ENCODE measurements at regions of chr7 and their contacts with region 1.

Region 1: GRCh38 chr7:149028346-149029109 is at the start of gene PDIA4:
- DNase-seq: peak; percentile 100
- H3K4me3 Mint-ChIP-seq: peak within 1 kb of the TSS; percentile 98
- H3K27ac Mint-ChIP-seq: peak within 1 kb of the TSS; percentile 93
- H3K4me1 Mint-ChIP-seq: peaks cover 32% of the 10 kb centered on the region
- H3K27me3 Mint-ChIP-seq: peaks cover 2% of the 10 kb centered on the region
- total RNA-seq, gene PDIA4: 155 and 159 TPM in 2 replicates

Region 2: GRCh38 chr7:148983187-148984146 is 45.1 kb before region 1 on chr7:
- intact Hi-C with region 1: loop called (anchors 1 kb)
- DNase-seq: peak; percentile 71
- H3K4me3 Mint-ChIP-seq: peak overlapping the region; percentile 97
- H3K27ac Mint-ChIP-seq: peak overlapping the region; percentile 85
- H3K4me1 Mint-ChIP-seq: peaks cover 39% of the 10 kb centered on the region
- H3K27me3 Mint-ChIP-seq: peaks cover 5% of the 10 kb centered on the region

Region 3: DNA sequence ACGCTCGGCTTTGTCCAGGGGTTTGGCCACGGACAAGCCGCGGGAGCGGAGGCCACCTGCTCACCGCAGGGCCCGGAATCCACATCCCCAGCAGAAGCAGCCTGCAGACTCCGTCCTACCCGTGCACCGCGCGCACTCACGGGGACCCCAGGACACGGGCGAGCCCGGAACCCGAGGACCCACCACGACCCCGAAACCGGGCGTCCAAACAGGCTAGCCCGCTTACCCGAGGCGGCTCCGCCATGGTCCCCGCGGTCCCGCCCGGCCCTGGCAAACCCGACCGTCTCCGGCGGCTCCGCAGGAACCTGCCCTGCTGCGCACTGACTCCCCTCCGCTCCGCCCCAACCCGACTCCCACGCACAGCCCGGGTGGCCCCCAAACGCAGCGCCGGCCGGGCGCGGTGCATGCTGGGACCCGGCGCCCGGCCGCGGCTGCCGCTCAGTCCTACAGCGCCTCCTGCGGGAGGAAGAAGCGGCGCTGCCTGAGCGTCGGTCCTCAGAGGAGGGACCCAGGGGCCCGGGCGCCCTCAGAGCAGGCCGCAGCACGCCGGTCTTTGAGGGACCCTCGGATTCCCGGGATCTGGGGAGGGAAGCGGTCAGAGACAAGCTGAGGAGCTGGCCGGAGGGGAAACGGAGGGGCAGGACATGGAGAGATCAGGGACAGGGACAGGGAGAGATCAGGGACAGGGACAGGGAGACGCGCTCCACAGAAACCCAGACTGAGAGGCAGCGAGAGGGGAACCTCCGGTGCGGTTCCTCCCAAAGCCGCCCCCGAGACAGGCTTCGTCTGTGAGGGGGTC is 62.1 kb after region 1 on chr7 and contains the start of gene ZNF786:
- intact Hi-C with region 1: loop called (anchors 1 kb)
- DNase-seq: peak; percentile 85
- H3K4me3 Mint-ChIP-seq: peak within 1 kb of the TSS; percentile 100
- H3K27ac Mint-ChIP-seq: peak within 1 kb of the TSS; percentile 100
- H3K4me1 Mint-ChIP-seq: peaks cover 12% of the 10 kb centered on the region
- H3K27me3 Mint-ChIP-seq: no peaks in the 10 kb centered on the region
- total RNA-seq, gene ZNF786: 10.0 and 10.3 TPM in 2 replicates

Region 4: DNA sequence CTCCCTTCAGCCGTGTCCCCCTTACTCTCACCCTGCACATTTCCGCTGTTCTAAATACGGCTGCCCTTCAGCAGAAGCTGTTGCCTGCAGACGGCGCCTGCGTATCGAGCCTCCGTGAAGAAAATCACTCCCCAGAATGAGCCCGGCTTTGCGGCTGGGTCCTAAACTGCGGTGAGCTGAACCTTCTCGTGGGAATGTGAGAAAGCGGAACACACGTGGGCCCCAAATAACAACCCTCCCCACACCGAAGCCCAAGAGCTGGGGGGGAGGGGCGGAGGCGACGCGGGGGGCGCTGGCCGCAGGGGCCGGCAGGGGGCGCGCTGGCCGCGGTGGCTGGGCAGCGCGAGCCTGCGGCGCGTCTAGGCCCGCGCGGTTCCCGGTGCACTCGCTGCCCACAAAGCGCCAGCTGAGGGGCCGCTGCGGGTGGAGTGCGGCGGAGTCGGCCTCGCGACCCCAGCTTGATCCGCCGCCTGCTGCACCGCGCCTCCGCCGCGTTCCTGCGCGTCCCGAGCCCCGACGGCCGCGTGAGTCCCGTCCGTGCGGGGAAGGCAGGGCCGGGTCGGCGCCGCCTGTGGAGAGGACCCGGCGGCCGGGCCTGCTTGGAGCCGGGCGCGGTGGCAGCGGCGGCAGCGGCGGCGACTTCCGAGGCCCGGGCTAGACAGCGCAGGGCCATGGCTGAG is 118.7 kb after region 1 on chr7 and contains the start of gene ZNF398:
- intact Hi-C with region 1: loop called (anchors 2 kb)
- DNase-seq: peak; percentile 74
- H3K4me3 Mint-ChIP-seq: peak within 1 kb of the TSS; percentile 90
- H3K27ac Mint-ChIP-seq: peak within 1 kb of the TSS; percentile 93
- H3K4me1 Mint-ChIP-seq: peaks cover 24% of the 10 kb centered on the region
- H3K27me3 Mint-ChIP-seq: no peaks in the 10 kb centered on the region
- total RNA-seq, gene ZNF398: 15.9 and 16.9 TPM in 2 replicates

Region 5: GRCh38 chr7:149714050-149714909 is 685.8 kb after region 1 on chr7:
- intact Hi-C with region 1: loop called (anchors 10 kb)
- DNase-seq: peak; percentile 79
- H3K4me3 Mint-ChIP-seq: peak overlapping the region; percentile 74
- H3K27ac Mint-ChIP-seq: peak overlapping the region; percentile 28
- H3K4me1 Mint-ChIP-seq: peaks cover 16% of the 10 kb centered on the region
- H3K27me3 Mint-ChIP-seq: no peaks in the 10 kb centered on the region

Measured in activated T-helper 2 cell treated with anti-CD3 and anti-CD28 coated beads, Interferon-gamma antibody, Interleukin-2, Interleukin-4, amounts not matched to agents 10 μg/mL and 5 μg/mL and 100 μg/mL, durations not matched to agents 14 hours and 24 hours and 36 hours (primary cell).